GM10248 (cell line): ENCODE measurements at regions of chr1 and their contacts with region 1.

Region 1: GRCh38 chr1:6701437-6702153 is at the start of gene DNAJC11:
- DNase-seq: peak; percentile 97
- CTCF ChIP-seq: peak; percentile 99

Region 2: DNA sequence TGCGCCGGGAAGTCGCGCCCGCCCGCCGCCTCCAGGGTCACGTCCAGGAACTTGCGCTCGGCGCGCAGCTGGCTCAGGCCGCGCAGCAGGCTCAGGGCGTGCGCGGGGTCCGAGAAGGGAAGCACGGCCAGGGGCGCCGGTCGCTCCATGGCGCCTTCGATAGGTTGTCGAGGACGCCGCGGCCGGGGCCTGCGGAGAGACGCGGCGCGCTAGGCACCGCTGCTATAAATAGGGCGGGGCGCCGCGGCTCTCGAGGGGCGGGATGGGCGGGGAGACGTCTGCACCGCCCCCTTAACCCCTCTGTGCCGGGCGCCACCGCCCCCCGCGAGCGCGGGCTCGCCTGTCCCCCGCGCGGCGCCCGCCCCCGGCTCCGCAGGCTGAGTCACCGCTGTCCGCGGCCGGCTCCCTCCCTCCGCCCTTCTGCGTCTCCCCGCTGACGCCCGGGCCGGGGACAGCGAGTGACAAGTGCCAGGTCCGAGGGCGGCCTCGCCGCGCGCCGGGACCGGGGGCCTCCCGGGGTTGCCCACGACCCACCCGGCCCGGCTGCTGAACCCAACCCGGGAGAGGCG is 98.8 kb before region 1 on chr1 and contains the start of gene KLHL21:
- CTCF ChIA-PET with region 1: no interaction called
- POLR2A ChIA-PET with region 1: no interaction called
- DNase-seq: peak; percentile 92
- CTCF ChIP-seq: no peak

Region 3: GRCh38 chr1:6624710-6625583 is 76.6 kb before region 1 on chr1 and contains the start of gene THAP3:
- CTCF ChIA-PET with region 1: no interaction called
- POLR2A ChIA-PET with region 1: no interaction called
- DNase-seq: peak; percentile 94
- CTCF ChIP-seq: peak; percentile 29

Region 4: GRCh38 chr1:6658359-6659060 is 43.1 kb before region 1 on chr1:
- CTCF ChIA-PET with region 1: no interaction called
- POLR2A ChIA-PET with region 1: no interaction called
- DNase-seq: no peak
- CTCF ChIP-seq: no peak

Region 5: DNA sequence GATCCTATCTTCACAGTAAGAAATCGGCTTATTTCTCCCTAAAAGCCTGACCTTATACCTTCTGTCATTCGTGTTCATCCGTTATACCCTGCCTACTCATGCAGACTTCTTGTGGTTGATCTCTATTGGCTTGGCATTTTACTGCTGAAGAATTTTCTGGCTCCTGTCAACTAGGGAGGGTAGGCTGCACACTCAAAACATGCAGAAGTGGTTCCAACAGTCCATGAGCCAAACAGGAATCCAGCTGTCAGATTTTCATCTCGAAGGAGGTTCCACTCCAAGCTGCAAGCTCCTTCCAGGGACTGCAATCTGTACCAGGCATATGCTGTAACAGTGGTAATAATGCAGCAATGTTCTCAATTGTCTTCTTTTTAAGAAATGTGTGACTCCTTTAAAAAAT is 10.1 kb before region 1 on chr1:
- CTCF ChIA-PET with region 1: interaction called, 10 read pairs
- POLR2A ChIA-PET with region 1: no interaction called
- DNase-seq: no peak
- CTCF ChIP-seq: no peak

Region 6: DNA sequence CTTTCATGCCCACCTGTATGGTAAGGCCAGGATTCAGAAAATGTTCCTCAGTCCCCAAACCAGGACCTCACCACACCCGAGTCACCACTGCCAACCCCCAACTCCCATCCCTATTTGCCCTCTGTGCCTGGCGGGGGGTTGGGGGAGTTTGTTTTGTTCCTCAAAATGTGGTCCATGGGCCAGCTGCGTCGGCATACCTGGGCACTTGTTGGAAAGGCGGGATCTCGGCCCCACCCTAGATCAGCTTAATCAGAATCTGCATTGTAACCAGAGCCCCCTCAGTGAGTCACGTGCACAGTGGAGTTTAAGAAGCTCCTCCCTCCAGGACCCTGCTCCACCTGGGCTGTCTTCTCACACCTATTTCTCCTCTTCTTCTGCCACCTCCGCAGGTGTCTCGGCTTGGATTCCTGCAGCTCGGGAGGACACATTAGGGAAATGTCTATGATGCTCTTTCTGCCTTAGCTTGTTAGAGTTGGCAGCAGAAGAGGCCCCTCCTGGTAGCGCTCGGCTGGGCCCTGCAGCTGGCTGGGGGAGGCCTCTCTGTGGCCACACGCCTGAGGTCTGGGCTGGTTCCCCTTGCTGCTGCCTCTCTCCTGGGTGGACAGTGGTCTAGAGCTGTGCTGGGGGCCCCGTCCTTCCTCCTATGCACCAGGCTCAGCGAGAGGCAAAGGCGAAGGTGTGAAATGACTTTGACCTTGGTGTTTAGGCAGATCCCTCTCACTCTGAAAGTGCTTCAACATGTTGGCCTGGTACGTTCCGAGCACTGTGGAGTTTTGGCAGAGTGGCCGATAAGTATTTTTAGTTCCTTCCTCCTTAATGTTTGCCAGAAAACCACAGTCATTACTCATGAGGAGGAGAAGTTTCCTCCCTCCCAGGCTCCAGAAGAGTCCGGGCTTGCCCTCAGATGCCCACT is 41.9 kb after region 1 on chr1:
- CTCF ChIA-PET with region 1: no interaction called
- POLR2A ChIA-PET with region 1: no interaction called
- DNase-seq: peak; percentile 43
- CTCF ChIP-seq: no peak